B cell (primary cell): ENCODE measurements at regions of chr20 and their contacts with region 1.

Region 1: GRCh38 chr20:50467718-50468356 is 42.3 kb upstream of the PTPN1 start:
- DNase-seq: no peak
- ATAC-seq: no peak
- H3K4me3 ChIP-seq: no peak overlapping the region
- H3K4me3 Mint-ChIP-seq: no peak overlapping the region
- H3K27ac ChIP-seq: no peak overlapping the region
- H3K27ac Mint-ChIP-seq: peak overlapping the region; percentile 11
- H3K4me1 ChIP-seq: peaks cover 22 to 33% of the 10 kb centered on the region in 2 donors
- H3K4me1 Mint-ChIP-seq: peaks cover 26% of the 10 kb centered on the region
- H3K27me3 ChIP-seq: peaks cover 0 to 5% (median 2%) of the 10 kb centered on the region in 4 experiments
- H3K27me3 Mint-ChIP-seq: no peaks in the 10 kb centered on the region
- CTCF ChIP-seq: no peak

Region 2: GRCh38 chr20:50478162-50479036 is 10.6 kb after region 1 on chr20:
- CTCF ChIA-PET with region 1: interaction called, 20 read pairs
- POLR2A ChIA-PET with region 1: no interaction called
- intact Hi-C with region 1: no loop called
- DNase-seq: peak; percentile 84
- ATAC-seq: peak; percentile 99
- H3K4me3 ChIP-seq: no peak overlapping the region
- H3K4me3 Mint-ChIP-seq: peak overlapping the region; percentile 44
- H3K27ac ChIP-seq: no peak overlapping the region
- H3K27ac Mint-ChIP-seq: peak overlapping the region; percentile 67
- H3K4me1 ChIP-seq: peaks cover 20 to 32% of the 10 kb centered on the region in 2 donors
- H3K4me1 Mint-ChIP-seq: peaks cover 33% of the 10 kb centered on the region
- H3K27me3 ChIP-seq: no peaks in the 10 kb centered on the region
- H3K27me3 Mint-ChIP-seq: no peaks in the 10 kb centered on the region
- CTCF ChIP-seq: peak; percentile 73